ENCODE measurements at regions of chr9 and their contacts with region 1.

Region 1: GRCh38 chr9:120985810-120986222 is 59.2 kb upstream of the TRAF1 start:
- DNase-seq: no peak
- H3K4me3 ChIP-seq: no peak overlapping the region
- H3K27ac ChIP-seq: no peak overlapping the region
- H3K4me1 ChIP-seq: peaks cover 0 to 3% (median 0%) of the 10 kb centered on the region in 3 donors
- H3K27me3 ChIP-seq: no peaks in the 10 kb centered on the region
- CTCF ChIP-seq: peak in 5 of 6 experiments; percentile 21 to 54 (median 41)
- POLR2A ChIP-seq: no peak

Region 2: GRCh38 chr9:121059998-121060636 is 74.3 kb after region 1 on chr9:
- intact Hi-C with region 1: loop called (anchors 10 kb)
- DNase-seq: no peak
- H3K4me3 ChIP-seq: no peak overlapping the region
- H3K27ac ChIP-seq: no peak overlapping the region
- H3K4me1 ChIP-seq: peaks cover 0 to 15% (median 0%) of the 10 kb centered on the region in 3 donors
- H3K27me3 ChIP-seq: no peaks in the 10 kb centered on the region
- CTCF ChIP-seq: peak; percentile 25 to 83 (median 73)
- POLR2A ChIP-seq: no peak